Aorta (tissue), 5 donors: ENCODE measurements at regions of chr3 and their contacts with region 1.

Region 1: DNA sequence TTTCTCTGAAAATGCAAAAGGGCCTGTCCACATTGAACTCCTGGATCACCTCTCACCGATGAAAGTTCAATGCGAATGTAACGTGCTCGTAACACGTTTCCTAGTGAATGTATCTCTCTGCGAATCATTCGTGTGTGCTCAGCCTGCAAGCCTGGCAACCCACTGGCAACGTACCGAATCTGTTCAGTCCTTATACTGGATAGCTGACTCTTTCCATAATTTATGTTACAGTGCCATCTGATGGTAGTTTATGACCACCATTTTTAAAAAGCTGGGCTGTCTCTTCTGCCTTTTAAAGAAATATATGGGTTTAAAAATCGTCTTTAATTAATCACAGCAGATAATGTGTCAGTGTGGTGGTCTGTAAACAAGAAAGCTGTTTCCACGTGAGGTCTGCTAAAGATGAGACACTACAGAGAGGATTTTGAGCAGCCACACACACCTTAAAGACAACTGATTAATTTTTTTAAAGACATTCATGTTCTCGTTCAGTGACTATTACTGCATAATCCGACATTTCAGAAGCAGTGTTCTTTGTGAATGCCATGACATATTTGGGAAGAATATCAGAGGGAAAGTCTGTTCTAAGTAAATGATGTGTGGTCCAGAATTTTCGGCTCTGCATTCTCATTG is 69.4 kb upstream of the FOXP1 start:
- DNase-seq: peak in 1 of 2 donors; percentile 70
- ATAC-seq: peak; percentile 66
- H3K4me3 ChIP-seq: peak overlapping the region in 1 of 2 donors; percentile 63
- H3K27ac ChIP-seq: no peak overlapping the region
- H3K4me1 ChIP-seq: no peaks in the 10 kb centered on the region
- H3K27me3 ChIP-seq: no peaks in the 10 kb centered on the region

Region 2: DNA sequence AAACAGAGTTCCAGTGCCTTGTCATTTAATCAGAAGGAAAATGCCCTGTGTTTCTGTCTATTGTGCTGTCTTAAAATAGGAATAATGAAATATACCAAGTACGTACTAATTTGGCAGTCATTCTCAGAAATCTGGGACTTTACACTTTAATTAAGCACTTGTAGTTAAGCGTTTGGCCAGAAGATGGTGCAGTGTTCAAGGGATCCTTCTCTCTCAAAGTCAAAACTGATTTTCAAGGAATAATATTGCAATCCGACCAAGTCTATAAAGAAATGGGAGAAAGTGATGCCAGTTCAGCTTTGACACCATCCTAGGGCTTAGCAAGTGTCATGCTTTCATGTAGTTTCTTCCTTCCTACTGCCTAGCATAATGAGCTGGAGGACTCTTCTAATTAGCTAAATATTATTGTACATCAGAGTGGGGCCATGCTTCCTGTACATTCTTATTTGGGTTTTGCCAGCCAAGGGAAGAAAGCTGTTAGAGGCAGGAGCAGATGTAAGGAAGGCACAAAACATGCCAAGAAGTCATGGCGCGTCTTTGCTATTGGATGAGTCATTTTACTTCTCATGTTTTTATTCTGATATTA is 1588.6 kb before region 1 on chr3:
- intact Hi-C with region 1: loop called in 1 of 2 experiments (anchors 10 kb)
- DNase-seq: no peak
- ATAC-seq: no peak
- H3K4me3 ChIP-seq: no peak overlapping the region
- H3K27ac ChIP-seq: peak overlapping the region; percentile 22 to 44
- H3K4me1 ChIP-seq: peaks cover 7 to 8% of the 10 kb centered on the region in 2 donors
- H3K27me3 ChIP-seq: no peaks in the 10 kb centered on the region

Region 3: GRCh38 chr3:70539908-70540307 is 1113.0 kb before region 1 on chr3:
- intact Hi-C with region 1: loop called in 1 of 2 experiments (anchors 10 kb)
- DNase-seq: no peak
- ATAC-seq: no peak
- H3K4me3 ChIP-seq: no peak overlapping the region
- H3K27ac ChIP-seq: no peak overlapping the region
- H3K4me1 ChIP-seq: no peaks in the 10 kb centered on the region
- H3K27me3 ChIP-seq: no peaks in the 10 kb centered on the region

Region 4: DNA sequence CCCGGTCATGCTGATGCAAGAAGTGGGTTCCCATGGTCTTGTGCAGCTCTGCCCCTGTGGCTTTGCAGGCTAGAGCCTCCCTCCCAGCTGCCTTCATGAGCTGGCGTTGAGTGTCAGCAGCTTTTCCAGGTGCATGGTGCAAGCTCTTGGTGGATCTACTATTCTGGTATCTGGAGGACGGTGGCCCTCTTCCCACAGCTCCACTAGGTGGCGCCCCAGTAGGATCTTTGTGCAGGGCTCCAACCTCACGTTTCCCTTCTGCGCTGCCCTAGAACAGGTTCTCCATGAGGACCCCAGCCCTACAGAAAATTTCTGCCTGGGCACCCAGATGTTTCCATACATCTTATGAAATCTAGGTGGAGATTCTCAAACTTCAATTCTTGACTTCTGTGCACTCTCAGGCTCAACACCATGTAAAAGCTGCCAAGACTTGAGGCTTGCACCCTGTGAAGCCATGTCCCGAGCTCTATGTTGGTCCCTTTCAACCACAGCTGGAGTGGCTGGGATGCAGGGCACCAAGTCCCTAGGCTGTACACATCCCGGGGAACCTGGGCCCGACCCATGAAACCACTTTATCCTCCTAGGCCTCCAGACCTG is 1102.1 kb before region 1 on chr3:
- intact Hi-C with region 1: loop called (anchors 10 kb)
- DNase-seq: peak; percentile 79 to 88
- ATAC-seq: peak; percentile 76
- H3K4me3 ChIP-seq: no peak overlapping the region
- H3K27ac ChIP-seq: no peak overlapping the region
- H3K4me1 ChIP-seq: no peaks in the 10 kb centered on the region
- H3K27me3 ChIP-seq: no peaks in the 10 kb centered on the region

Region 5: GRCh38 chr3:70716832-70717231 is 936.1 kb before region 1 on chr3:
- intact Hi-C with region 1: loop called in 1 of 2 experiments (anchors 10 kb)
- DNase-seq: peak in 1 of 2 donors; percentile 45
- ATAC-seq: no peak
- H3K4me3 ChIP-seq: no peak overlapping the region
- H3K27ac ChIP-seq: no peak overlapping the region
- H3K4me1 ChIP-seq: no peaks in the 10 kb centered on the region
- H3K27me3 ChIP-seq: no peaks in the 10 kb centered on the region

Region 6: GRCh38 chr3:71629711-71630110 is 23.2 kb before region 1 on chr3:
- intact Hi-C with region 1: no loop called
- DNase-seq: peak in 1 of 2 donors; percentile 64
- ATAC-seq: peak; percentile 66
- H3K4me3 ChIP-seq: no peak overlapping the region
- H3K27ac ChIP-seq: no peak overlapping the region
- H3K4me1 ChIP-seq: peaks cover 0 to 1% of the 10 kb centered on the region in 2 donors
- H3K27me3 ChIP-seq: no peaks in the 10 kb centered on the region

Region 7: DNA sequence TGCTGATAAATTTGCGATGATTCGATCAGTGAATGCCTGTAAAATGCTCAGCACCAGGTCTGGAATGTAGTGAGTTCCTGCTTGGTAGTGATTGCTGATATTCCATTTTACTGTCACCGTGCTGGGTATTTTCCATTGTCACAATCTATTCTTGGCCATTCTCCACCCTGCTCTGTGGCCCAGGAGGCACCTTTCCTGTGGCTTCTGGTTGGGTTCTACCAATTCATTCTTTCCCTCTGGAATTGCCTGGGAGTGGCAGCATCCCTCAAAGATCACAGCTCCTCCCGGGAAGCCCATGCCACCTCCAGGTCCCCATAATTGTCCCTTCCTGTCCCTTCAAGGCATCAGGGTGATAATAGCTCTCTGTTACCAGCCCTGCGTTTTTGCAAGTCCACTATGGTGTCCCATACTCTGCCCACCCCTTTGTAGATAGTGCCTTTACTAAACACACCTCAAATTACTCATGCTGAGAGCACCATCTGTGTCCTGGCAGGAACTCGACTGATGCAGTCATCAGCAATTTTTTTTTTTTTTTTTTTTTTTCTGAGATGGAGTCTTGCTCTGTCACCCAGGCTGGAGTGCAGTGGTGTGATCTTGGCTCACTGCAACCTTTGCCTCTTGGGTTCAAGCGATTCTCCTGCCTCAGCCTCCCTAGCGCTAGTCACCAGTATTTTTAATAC is 309.8 kb after region 1 on chr3:
- intact Hi-C with region 1: no loop called
- DNase-seq: no peak
- ATAC-seq: no peak
- H3K4me3 ChIP-seq: no peak overlapping the region
- H3K27ac ChIP-seq: no peak overlapping the region
- H3K4me1 ChIP-seq: no peaks in the 10 kb centered on the region
- H3K27me3 ChIP-seq: no peaks in the 10 kb centered on the region